ENCODE measurements at regions of chr5 and their contacts with region 1.

Region 1: DNA sequence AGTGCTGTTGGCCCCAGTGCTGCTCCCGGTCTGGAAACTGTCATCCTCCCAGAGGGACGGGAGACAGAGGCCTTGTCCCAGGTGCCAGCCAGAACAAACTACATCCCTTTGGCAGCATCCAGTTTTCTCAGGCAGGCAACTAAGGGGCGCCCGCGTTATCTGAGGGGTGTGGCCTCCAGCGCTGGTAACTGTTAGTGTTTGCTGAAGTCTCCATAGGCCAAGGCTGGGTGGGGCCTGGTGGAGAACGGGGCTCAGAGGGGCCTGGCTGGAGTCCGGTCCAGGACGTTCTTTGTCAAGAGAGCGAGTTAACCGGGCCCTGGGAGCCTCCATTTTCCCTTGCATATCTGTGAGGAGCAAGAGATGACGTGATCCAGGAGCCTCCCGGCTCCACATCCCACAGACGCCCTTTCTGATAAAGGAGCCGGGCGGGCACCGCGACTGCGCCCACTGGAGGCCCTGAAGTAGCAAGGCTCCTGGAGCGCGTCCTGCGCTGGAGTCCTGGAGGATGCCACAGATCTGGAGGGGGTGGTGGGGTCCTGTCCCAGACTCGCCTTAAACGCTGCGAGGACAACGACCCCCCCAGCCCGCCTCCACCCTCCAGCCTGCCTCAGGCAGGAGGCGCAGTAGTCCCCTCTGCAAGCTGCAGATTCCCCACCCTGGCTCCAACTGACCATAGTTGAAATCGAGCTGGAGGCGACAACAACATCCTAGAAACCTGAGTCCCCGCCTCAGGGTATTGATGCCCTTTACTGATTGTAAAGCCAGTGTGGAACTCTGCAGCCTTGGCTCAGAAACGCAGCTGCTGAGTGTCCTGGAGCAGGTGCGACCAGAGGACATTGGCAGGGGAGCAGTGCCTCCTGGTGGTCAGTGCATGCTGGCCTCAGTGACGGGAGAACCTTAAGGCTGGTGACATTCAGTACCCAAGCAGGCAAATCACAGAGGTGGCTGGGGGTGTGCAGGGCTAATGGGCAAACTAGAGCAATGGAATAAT is 20.8 kb upstream of the ZNF354B start:
- DNase-seq: no peak
- ATAC-seq: peak; percentile 63
- H3K4me3 ChIP-seq: no peak overlapping the region
- H3K27ac ChIP-seq: no peak overlapping the region
- H3K4me1 ChIP-seq: no peaks in the 10 kb centered on the region
- H3K27me3 ChIP-seq: no peaks in the 10 kb centered on the region
- CTCF ChIP-seq: peak in 2 of 3 experiments; percentile 30 to 32; a peak in 3 of 6 replicates
- EP300 ChIP-seq: no peak
- POLR2A ChIP-seq: no peak
- RAD21 ChIP-seq: peak; percentile 27; the same call in 1 of the 2 replicates

Region 2: GRCh38 chr5:178732281-178732680 is 106.7 kb before region 1 on chr5:
- CTCF ChIA-PET with region 1: interaction called, 15 read pairs
- POLR2A ChIA-PET with region 1: no interaction called
- RAD21 ChIA-PET with region 1: interaction called, 4 read pairs
- SMC1A ChIA-PET with region 1: no interaction called
- in situ Hi-C with region 1: no loop called
- intact Hi-C with region 1: no loop called
- DNase-seq: no peak
- ATAC-seq: no peak
- H3K4me3 ChIP-seq: no peak overlapping the region
- H3K27ac ChIP-seq: no peak overlapping the region
- H3K4me1 ChIP-seq: no peaks in the 10 kb centered on the region
- H3K27me3 ChIP-seq: no peaks in the 10 kb centered on the region
- CTCF ChIP-seq: no peak
- EP300 ChIP-seq: no peak
- POLR2A ChIP-seq: no peak
- RAD21 ChIP-seq: no peak

Region 3: DNA sequence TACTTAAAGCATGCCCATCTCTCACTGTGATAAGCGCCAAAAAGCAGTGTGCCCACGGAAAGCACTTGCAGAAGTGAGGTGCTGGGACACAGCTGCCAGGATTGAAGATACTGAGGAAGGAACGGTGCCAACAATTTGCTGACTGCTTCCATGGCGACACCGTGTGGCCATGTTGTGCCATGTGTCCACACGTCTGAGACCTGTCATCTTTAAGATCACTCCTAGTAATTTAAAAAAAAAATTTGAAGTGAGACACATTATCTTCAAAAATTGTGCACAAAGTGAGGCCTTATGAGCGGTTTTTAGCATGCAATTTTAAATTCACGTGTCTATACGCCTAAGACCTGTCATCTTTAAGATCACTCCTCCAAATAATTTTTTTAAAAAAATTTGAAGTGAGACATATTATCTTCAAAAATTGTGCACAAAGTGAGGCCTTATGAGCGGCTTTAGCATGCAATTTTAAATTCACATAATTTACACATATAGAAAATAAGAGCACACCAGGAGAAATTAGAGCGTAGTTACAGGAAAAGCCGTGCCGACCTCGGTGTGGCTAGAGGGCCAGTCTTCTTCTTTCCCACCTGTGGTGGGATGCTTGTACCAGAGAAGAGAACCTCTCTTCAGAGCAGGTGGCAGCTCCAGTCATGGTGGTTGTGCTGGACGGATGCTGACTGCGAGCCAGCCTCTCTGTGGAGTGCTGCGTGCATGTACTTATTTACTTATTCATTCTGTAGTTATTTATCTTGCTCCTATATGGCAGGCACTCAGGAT is 1831.8 kb after region 1 on chr5:
- CTCF ChIA-PET with region 1: no interaction called
- POLR2A ChIA-PET with region 1: no interaction called
- RAD21 ChIA-PET with region 1: interaction called, 7 read pairs
- SMC1A ChIA-PET with region 1: interaction called, 3 read pairs
- in situ Hi-C with region 1: loop called (anchors 5 kb)
- intact Hi-C with region 1: no loop called
- DNase-seq: peak; percentile 15
- ATAC-seq: peak; percentile 76
- H3K4me3 ChIP-seq: no peak overlapping the region
- H3K27ac ChIP-seq: no peak overlapping the region
- H3K4me1 ChIP-seq: no peaks in the 10 kb centered on the region
- H3K27me3 ChIP-seq: peaks cover 0 to 2% of the 10 kb centered on the region in 2 experiments; a peak in 2 of 4 replicates
- CTCF ChIP-seq: peak; percentile 74 to 79 (median 78)
- EP300 ChIP-seq: no peak
- POLR2A ChIP-seq: no peak
- RAD21 ChIP-seq: peak; percentile 50